HepG2 (cell line): ENCODE measurements at regions of chr5 and their contacts with region 1.

Region 1: GRCh38 chr5:173972925-173973615 is 15.9 kb upstream of the C5orf47 start:
- DNase-seq: peak; percentile 73
- ATAC-seq: peak; percentile 59
- H3K4me3 ChIP-seq: peak overlapping the region; percentile 65 to 74 (median 65)
- H3K27ac ChIP-seq: no peak overlapping the region
- H3K4me1 ChIP-seq: peaks cover 72% of the 10 kb centered on the region
- H3K27me3 ChIP-seq: no peaks in the 10 kb centered on the region
- CTCF ChIP-seq: peak; percentile 90
- EP300 ChIP-seq: no peak
- POLR2A ChIP-seq: no peak
- RAD21 ChIP-seq: peak; percentile 92

Region 2: GRCh38 chr5:173615884-173616576 is 357.0 kb before region 1 on chr5:
- CTCF ChIA-PET with region 1: interaction called, 23 read pairs
- POLR2A ChIA-PET with region 1: interaction called, 9 read pairs
- in situ Hi-C with region 1: loop called (anchors 5 kb)
- intact Hi-C with region 1: loop called (anchors 1 kb)
- DNase-seq: peak; percentile 76
- ATAC-seq: peak; percentile 78
- H3K4me3 ChIP-seq: peak overlapping the region; percentile 83 to 92 (median 86)
- H3K27ac ChIP-seq: peak overlapping the region; percentile 79
- H3K4me1 ChIP-seq: peaks cover 61% of the 10 kb centered on the region
- H3K27me3 ChIP-seq: no peaks in the 10 kb centered on the region; a peak in 1 of 5 replicates
- CTCF ChIP-seq: peak; percentile 57
- EP300 ChIP-seq: no peak
- POLR2A ChIP-seq: peak in 1 of 2 experiments; percentile 41; a peak in 1 of 4 replicates
- RAD21 ChIP-seq: no peak; the same call in 1 of the 2 replicates

Region 3: DNA sequence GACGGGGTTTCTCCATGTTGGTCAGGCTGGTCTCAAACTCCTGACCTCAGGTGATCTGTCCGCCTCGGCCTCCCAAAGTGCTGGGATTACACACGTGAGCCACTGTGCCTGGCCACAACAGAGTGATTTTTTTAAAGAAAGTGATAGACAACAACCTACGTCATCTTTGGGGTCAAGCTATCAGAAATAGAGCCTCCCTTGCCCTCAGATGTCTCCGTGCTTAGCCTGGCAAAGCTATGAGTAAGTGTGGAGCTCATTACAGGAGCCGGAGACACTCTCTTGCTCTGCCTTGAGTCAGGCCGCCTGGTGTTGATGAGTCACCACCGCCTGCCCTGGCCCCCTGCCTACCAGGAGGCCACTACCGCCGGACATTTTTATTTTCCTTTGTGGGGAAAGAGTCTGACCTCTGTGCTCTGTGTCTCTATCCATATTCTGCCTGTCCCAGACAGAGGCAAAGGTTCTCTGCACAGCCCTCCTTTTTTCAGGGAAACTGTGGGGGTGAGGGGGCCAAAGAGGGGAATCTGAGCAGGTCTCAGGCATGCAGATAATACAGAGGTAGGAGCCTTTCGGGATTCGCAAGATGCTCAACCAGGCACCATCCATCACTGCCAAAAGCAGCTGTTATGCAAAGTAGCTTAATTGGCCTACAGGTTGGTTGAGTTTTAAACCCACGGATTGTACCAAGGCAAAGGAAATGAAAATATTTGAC is 208.6 kb before region 1 on chr5:
- CTCF ChIA-PET with region 1: no interaction called
- POLR2A ChIA-PET with region 1: interaction called, 13 read pairs
- in situ Hi-C with region 1: loop called (anchors 25 kb)
- intact Hi-C with region 1: loop called (anchors 2 kb)
- DNase-seq: peak; percentile 88
- ATAC-seq: peak; percentile 83
- H3K4me3 ChIP-seq: peak overlapping the region; percentile 8 to 44 (median 14); a peak in 3 of 6 replicates
- H3K27ac ChIP-seq: peak overlapping the region; percentile 89
- H3K4me1 ChIP-seq: peaks cover 100% of the 10 kb centered on the region
- H3K27me3 ChIP-seq: no peaks in the 10 kb centered on the region
- CTCF ChIP-seq: 0 out of 2 replicates have a peak, but pooled peaks have one; percentile 22
- EP300 ChIP-seq: peak in 1 of 2 experiments; percentile 70; a peak in 2 of 4 replicates
- POLR2A ChIP-seq: peak; percentile 45 to 68; a peak in 3 of 4 replicates
- RAD21 ChIP-seq: 0 out of 2 replicates have a peak, but pooled peaks have one; percentile 11

Region 4: DNA sequence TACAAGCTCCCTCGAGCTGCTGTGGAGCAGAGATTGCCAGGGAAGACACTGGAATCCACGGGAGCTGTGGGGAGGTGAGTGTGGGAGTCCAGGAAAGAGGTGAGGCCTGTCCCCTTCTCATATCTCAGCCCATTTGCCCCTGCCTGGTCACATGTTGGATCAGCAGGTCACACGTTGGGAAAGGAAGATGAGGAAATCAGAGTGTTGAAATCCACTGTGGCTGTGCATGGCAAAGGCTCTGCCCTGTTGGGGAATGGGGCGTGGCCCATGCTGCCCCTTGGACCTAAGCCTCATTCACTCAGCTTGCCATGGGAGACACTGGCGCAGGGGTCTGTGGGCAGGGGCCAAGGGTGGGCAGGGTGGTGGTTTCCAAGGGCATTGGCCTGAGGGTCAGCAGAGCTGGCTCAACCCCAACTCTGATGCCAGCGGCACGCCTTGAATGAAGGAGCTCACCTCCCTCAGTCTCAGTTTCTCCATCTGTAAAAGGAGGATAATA is 170.4 kb before region 1 on chr5:
- CTCF ChIA-PET with region 1: no interaction called
- POLR2A ChIA-PET with region 1: interaction called, 17 read pairs
- in situ Hi-C with region 1: no loop called
- intact Hi-C with region 1: loop called (anchors 1 kb)
- DNase-seq: peak; percentile 95
- ATAC-seq: peak; percentile 84
- H3K4me3 ChIP-seq: peak overlapping the region in 1 of 3 experiments; percentile 36; a peak in 1 of 6 replicates
- H3K27ac ChIP-seq: peak overlapping the region; percentile 58
- H3K4me1 ChIP-seq: peaks cover 87% of the 10 kb centered on the region
- H3K27me3 ChIP-seq: no peaks in the 10 kb centered on the region
- CTCF ChIP-seq: 0 out of 2 replicates have a peak, but pooled peaks have one; percentile 12
- EP300 ChIP-seq: peak; percentile 92 to 96
- POLR2A ChIP-seq: peak in 1 of 2 experiments; percentile 32; a peak in 1 of 4 replicates
- RAD21 ChIP-seq: peak; percentile 37; the same call in 1 of the 2 replicates

Region 5: GRCh38 chr5:173887610-173888472 is 85.2 kb before region 1 on chr5 and contains the start of gene CPEB4:
- CTCF ChIA-PET with region 1: no interaction called
- POLR2A ChIA-PET with region 1: interaction called, 28 read pairs
- in situ Hi-C with region 1: loop called (anchors 5 kb)
- intact Hi-C with region 1: loop called (anchors 1 kb)
- DNase-seq: peak; percentile 99
- ATAC-seq: peak; percentile 98
- H3K4me3 ChIP-seq: peak within 1 kb of the TSS; percentile 79 to 90 (median 81)
- H3K27ac ChIP-seq: peak within 1 kb of the TSS; percentile 92
- H3K4me1 ChIP-seq: peaks cover 48% of the 10 kb centered on the region
- H3K27me3 ChIP-seq: no peaks in the 10 kb centered on the region
- CTCF ChIP-seq: no peak
- EP300 ChIP-seq: no peak
- POLR2A ChIP-seq: peak; percentile 83 to 84
- RAD21 ChIP-seq: no peak
- total RNA-seq, gene CPEB4: 7.7 and 8.3 TPM in 2 replicates

Region 6: DNA sequence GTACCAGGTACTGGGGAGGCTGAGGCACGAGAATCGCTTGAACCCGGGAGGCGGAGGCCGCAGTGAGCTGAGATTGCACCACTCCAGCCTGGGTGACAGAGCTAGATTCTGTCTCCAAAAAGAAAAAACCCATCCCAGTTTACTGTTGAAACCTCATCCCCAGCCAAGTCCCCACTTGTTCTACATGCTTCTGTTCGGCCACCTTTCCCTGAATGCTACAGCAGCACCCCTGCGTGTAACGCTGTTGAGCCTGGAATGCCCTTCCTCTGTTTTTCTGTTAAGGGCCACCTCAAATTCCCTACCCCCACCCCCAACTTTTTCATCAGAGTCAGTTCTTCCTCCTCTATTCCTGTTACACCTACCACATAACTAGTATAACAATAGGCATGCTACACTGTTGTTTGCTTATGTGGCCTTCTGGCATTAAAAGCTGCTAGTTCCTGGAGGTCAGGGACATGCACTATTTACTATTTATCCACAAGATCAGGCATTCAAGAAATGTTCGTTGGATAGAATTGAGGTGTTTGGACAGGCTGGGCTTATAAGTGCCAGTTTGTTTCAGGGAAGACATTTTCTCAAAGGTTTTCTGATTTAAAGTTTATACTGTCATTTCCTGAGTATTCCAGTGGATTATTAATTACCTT is 31.2 kb before region 1 on chr5:
- CTCF ChIA-PET with region 1: no interaction called
- POLR2A ChIA-PET with region 1: interaction called, 27 read pairs
- in situ Hi-C with region 1: no loop called
- intact Hi-C with region 1: no loop called
- DNase-seq: peak; percentile 95
- ATAC-seq: peak; percentile 96
- H3K4me3 ChIP-seq: peak overlapping the region in 1 of 3 experiments; percentile 5; a peak in 2 of 6 replicates
- H3K27ac ChIP-seq: peak overlapping the region; percentile 73
- H3K4me1 ChIP-seq: peaks cover 74% of the 10 kb centered on the region
- H3K27me3 ChIP-seq: no peaks in the 10 kb centered on the region; a peak in 1 of 5 replicates
- CTCF ChIP-seq: no peak
- EP300 ChIP-seq: peak; percentile 49 to 96; a peak in 3 of 4 replicates
- POLR2A ChIP-seq: no peak
- RAD21 ChIP-seq: no peak

Region 7: DNA sequence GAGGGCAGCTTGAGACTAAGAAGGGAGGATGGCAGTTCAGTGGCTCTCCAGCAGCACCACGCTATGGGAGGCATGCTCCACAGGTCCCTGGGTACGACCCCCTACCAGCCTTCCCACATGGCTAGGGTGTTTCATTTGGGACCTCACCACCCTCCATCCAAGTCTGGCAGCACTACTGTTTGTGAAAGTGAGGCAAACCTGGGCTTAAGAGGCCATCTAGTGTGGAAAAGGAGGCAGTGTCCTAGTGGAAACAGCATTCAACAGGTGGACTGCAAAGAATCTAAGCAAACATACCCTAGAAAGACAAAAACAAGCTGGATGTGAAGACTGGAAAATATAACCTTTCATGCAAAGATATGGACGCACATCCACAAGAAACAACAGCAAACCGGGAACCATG is 11.1 kb after region 1 on chr5:
- CTCF ChIA-PET with region 1: no interaction called
- POLR2A ChIA-PET with region 1: no interaction called
- in situ Hi-C with region 1: no loop called
- intact Hi-C with region 1: no loop called
- DNase-seq: peak; percentile 57
- ATAC-seq: peak; percentile 92
- H3K4me3 ChIP-seq: no peak overlapping the region
- H3K27ac ChIP-seq: no peak overlapping the region
- H3K4me1 ChIP-seq: no peaks in the 10 kb centered on the region
- H3K27me3 ChIP-seq: no peaks in the 10 kb centered on the region
- CTCF ChIP-seq: peak; percentile 94
- EP300 ChIP-seq: no peak
- POLR2A ChIP-seq: no peak
- RAD21 ChIP-seq: peak; percentile 84